Activated naive CD4-positive, alpha-beta T cell treated with anti-CD3 and anti-CD28 coated beads, Interleukin-2, amount 10 ng/mL, durations not matched to agents 7 days and 5 days (primary cell): ENCODE measurements at regions of chr9 and their contacts with region 1.

Region 1: DNA sequence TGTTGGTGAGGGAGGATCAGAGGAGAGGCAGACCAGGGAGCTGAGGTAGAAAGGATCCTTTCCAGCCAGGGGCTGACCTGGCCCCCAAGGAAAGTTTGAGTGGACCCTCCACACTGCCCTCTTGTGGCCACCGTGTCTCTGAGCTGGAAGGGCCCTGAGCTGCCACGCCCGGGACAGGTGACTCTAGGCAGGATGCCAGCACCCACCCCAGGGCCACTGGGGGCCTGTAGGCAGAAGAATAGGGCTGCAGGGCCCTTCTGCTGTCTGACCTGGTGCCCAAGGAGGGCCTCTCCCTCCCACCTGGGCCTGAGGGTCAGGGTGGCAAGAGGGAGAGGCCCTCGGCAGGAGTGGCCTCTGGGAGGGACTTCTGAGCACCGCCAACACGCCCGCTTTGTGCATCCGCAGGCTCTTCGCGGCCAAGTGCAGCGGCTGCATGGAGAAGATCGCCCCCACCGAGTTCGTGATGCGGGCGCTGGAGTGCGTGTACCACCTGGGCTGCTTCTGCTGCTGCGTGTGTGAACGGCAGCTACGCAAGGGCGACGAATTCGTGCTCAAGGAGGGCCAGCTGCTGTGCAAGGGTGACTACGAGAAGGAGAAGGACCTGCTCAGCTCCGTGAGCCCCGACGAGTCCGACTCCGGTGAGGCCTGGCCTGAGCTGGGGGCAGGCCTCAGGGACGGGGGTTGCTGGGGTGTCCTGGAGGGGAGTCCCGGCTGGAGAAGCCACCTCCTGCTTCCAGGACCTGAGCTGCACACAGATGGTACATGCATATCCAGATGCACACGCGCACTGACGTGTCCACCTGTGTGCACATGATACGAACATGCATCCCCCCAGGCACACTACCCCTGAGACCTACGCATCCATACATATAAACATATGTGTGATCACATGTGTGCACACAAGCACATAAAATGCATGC is 77.0 kb downstream of the LMX1B start:
- DNase-seq: peak; percentile 71
- H3K4me3 Mint-ChIP-seq: no peak overlapping the region
- H3K27ac Mint-ChIP-seq: no peak overlapping the region
- H3K4me1 Mint-ChIP-seq: no peaks in the 10 kb centered on the region
- H3K27me3 Mint-ChIP-seq: peaks cover 54% of the 10 kb centered on the region

Region 2: DNA sequence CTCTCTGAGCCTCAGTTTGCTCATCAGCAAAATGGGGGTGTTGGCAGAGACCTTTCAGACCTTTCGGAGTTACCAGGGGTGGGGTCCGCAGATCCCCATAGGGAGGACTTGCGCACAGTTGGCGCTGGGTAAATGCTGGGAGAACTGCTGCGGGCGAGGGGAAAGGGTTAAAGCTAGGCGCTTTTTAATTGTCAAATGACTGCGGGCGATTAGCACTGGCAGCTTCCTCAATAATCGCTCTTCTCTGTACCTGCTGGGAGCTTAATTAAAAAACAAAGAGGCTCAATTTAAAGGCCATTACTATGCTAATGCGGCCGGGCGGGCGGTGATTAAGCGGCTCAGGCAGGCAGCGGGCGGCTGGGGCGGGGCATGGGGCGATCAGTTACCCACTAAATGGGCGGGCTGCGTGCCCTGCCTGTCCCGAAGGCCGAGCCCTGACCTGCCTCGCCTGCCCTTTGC is 14.0 kb before region 1 on chr9:
- CTCF ChIA-PET with region 1: interaction called, 17 read pairs
- DNase-seq: no peak
- H3K4me3 Mint-ChIP-seq: no peak overlapping the region
- H3K27ac Mint-ChIP-seq: no peak overlapping the region
- H3K4me1 Mint-ChIP-seq: peaks cover 2% of the 10 kb centered on the region
- H3K27me3 Mint-ChIP-seq: peaks cover 31% of the 10 kb centered on the region

Region 3: GRCh38 chr9:126781186-126782052 is 90.7 kb after region 1 on chr9:
- CTCF ChIA-PET with region 1: interaction called, 14 read pairs
- DNase-seq: peak; percentile 88
- H3K4me3 Mint-ChIP-seq: no peak overlapping the region
- H3K27ac Mint-ChIP-seq: no peak overlapping the region
- H3K4me1 Mint-ChIP-seq: peaks cover 4% of the 10 kb centered on the region
- H3K27me3 Mint-ChIP-seq: peaks cover 61% of the 10 kb centered on the region